ENCODE measurements at regions of chr7 and their contacts with region 1.

Region 1: DNA sequence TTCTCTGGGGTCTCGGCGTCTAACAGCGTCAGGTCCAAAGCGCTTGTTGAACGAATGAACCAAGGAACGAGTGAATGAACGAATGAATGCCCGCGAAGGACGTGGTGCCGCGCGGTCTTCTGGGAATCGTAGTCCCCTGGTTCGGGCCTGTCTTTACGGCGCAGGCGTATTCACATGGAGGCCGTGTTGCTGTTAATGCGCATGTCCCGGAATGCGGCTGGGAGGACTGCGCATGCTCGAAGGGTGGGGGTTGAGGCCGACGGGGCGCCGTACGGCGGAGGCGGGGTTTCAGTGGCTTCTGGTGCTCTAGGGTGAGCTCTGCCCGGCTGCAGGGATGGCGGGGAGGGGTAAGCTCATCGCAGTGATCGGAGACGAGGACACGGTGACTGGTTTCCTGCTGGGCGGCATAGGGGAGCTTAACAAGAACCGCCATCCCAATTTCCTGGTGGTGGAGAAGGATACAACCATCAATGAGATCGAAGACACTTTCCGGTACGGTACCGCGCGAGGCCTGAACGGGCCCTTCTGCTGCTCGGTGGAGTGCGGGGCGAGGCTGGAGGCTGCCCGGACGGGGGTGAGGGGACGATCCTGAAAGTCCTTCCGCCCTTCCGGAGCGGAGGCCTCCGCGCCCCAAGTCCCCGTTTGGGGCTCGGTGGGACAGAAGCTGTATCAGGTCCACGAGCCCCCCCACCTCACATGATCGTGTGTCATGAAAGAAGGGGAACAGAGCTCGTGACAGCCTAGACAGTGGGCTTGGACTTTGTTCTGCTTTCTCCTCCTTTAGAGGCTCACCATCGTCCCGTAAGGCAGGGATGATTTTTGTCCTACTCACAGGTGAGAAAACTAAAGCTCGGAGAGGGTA is at the start of gene ATP6V1F:
- DNase-seq: peak; percentile 99
- ATAC-seq: peak; percentile 85
- H3K4me3 Mint-ChIP-seq: peak within 1 kb of the TSS; percentile 98
- H3K27ac Mint-ChIP-seq: peak within 1 kb of the TSS; percentile 97
- H3K4me1 Mint-ChIP-seq: peaks cover 31% of the 10 kb centered on the region
- H3K27me3 Mint-ChIP-seq: peaks cover 16% of the 10 kb centered on the region
- CTCF ChIP-seq: no peak
- total RNA-seq, gene ATP6V1F: 117 to 121 TPM (median 120 TPM) in 3 replicates

Region 2: DNA sequence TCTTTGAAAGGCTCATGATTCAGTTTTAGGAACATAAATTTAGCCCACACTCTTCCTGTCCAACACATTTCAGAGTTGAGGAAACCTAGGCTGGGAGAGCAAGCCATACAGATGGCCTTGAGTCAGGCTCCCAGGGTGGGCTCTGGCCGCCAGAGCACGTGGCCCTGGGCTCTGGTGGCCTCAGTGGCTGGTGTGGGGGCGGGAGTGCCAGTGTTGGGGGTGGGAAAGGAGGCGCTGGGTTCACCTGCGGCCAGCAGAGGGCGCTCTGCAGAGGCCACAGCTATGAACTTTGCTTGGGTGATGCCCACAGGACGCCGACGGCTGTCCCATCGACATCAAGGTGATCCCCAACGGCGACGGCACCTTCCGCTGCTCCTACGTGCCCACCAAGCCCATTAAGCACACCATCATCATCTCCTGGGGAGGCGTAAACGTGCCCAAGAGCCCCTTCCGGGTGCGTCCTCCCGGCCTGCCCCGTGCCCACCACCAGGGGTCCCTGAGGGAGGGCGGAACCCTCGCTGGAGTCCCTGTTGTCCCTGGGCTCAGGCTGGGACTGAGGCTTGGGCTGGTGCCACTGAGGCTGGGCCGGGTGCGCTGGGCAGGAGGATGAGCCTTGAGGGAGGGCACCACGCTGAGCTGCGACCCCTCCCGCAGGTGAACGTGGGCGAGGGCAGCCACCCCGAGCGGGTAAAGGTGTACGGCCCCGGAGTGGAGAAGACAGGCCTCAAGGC is 20.7 kb before region 1 on chr7:
- CTCF ChIA-PET with region 1: interaction called, 19 read pairs
- POLR2A ChIA-PET with region 1: no interaction called
- DNase-seq: peak; percentile 78
- ATAC-seq: peak; percentile 71
- H3K4me3 Mint-ChIP-seq: peak overlapping the region; percentile 40; the same call in 1 of the 2 replicates
- H3K27ac Mint-ChIP-seq: no peak overlapping the region; the same call in 1 of the 2 replicates
- H3K4me1 Mint-ChIP-seq: peaks cover 8% of the 10 kb centered on the region
- H3K27me3 Mint-ChIP-seq: no peaks in the 10 kb centered on the region; the same call in 1 of the 2 replicates
- CTCF ChIP-seq: peak; percentile 98

Region 3: GRCh38 chr7:128874140-128875031 is 11.6 kb after region 1 on chr7:
- CTCF ChIA-PET with region 1: interaction called, 149 read pairs
- POLR2A ChIA-PET with region 1: no interaction called
- DNase-seq: no peak
- ATAC-seq: no peak
- H3K4me3 Mint-ChIP-seq: no peak overlapping the region
- H3K27ac Mint-ChIP-seq: no peak overlapping the region
- H3K4me1 Mint-ChIP-seq: peaks cover 4% of the 10 kb centered on the region; the same call in 1 of the 2 replicates
- H3K27me3 Mint-ChIP-seq: peaks cover 25% of the 10 kb centered on the region
- CTCF ChIP-seq: no peak

Measured in WTC11 (cell line).